Heart right ventricle (tissue), 16 donors: ENCODE measurements at regions of chr2 and their contacts with region 1.

Region 1: DNA sequence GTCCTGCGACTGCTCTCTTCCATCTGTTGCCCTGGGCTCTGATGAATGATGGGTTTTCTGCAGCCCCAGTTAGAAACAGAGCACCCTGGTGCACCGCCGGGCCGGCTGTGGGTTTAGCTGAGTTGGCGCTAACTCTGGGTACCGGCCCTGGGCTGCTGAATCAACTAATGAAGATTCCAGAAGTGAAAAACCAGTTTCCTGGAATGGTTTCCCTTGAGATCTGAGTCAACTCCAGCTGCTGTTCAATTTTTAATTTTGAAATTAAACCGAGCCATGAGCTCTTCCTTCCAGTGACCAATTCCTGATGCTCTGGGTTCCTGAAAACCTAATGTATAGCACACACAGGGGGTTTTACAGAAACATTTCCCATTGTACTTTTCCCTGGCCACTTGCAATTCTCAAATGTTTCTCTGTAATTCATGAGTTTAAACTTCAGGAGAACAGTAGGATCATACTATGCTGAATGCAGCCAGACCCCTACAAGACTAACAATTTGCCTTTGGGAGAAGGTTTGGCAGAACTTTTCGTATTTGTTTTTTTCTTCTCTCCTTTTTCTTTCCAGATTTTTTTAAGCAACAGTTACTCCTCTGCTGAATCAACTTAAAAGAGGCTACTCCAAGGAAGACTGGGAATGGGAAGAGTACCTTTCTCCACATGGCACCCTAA is 5.5 kb downstream of the COL6A3 start:
- DNase-seq: peak in 1 of 2 donors; percentile 38
- ATAC-seq: peak; percentile 21 to 59 (median 42)
- H3K4me3 ChIP-seq: peak overlapping the region in 6 of 10 donors; percentile 11 to 58 (median 26)
- H3K27ac ChIP-seq: peak overlapping the region; percentile 6 to 87 (median 81)
- H3K4me1 ChIP-seq: peaks cover 5 to 66% (median 38%) of the 10 kb centered on the region in 9 donors
- H3K27me3 ChIP-seq: peaks cover 0 to 27% (median 3%) of the 10 kb centered on the region in 7 donors
- CTCF ChIP-seq: no peak

Region 2: GRCh38 chr2:237122214-237122666 is 286.2 kb before region 1 on chr2:
- intact Hi-C with region 1: loop called in 5 of 10 experiments (anchors 2 to 10 kb)
- DNase-seq: peak; percentile 47 to 65
- ATAC-seq: peak; percentile 56 to 86 (median 74)
- H3K4me3 ChIP-seq: no peak overlapping the region
- H3K27ac ChIP-seq: no peak overlapping the region
- H3K4me1 ChIP-seq: peaks cover 0 to 17% (median 0%) of the 10 kb centered on the region in 9 donors
- H3K27me3 ChIP-seq: no peaks in the 10 kb centered on the region
- CTCF ChIP-seq: peak; percentile 46 to 76 (median 71)

Region 3: DNA sequence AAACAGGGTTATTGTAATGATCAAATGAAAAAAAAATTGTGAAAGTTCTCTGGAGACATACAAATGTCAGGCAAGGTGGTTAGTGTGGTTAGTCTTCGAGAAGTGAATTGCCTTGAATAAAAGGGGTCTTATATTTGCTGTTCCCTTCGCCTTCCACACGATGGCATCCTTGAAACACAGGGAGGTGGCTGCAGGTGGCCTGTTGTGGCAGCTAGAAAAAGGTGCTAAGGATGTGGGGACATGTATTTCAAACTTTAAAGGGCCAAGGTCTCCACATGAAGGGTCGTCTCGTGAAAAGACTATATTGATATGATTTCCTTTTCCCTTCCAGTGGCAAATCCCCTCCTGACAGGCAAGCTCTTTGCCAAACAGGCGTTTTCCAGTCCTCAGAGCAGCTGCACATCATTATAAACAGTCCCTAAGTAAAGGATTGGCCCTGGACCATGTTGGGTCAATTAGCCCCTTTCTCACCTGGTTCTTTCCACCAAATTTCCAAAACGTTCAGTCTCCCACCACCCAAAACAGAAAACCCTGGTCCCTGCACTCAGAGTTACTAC is 254.3 kb before region 1 on chr2:
- intact Hi-C with region 1: loop called in 5 of 10 experiments (anchors 1 to 10 kb)
- DNase-seq: no peak
- ATAC-seq: no peak
- H3K4me3 ChIP-seq: no peak overlapping the region
- H3K27ac ChIP-seq: peak overlapping the region in 5 of 10 donors; percentile 14 to 82 (median 76)
- H3K4me1 ChIP-seq: peaks cover 0 to 28% (median 7%) of the 10 kb centered on the region in 9 donors
- H3K27me3 ChIP-seq: peaks cover 0 to 7% (median 0%) of the 10 kb centered on the region in 7 donors
- CTCF ChIP-seq: peak; percentile 12 to 67 (median 63)

Region 4: GRCh38 chr2:237165405-237166276 is 242.8 kb before region 1 on chr2:
- intact Hi-C with region 1: loop called in 6 of 10 experiments (anchors 2 to 5 kb)
- DNase-seq: no peak
- ATAC-seq: peak in 3 of 8 donors; percentile 12 to 39 (median 33)
- H3K4me3 ChIP-seq: no peak overlapping the region
- H3K27ac ChIP-seq: peak overlapping the region in 7 of 10 donors; percentile 33 to 75 (median 47)
- H3K4me1 ChIP-seq: peaks cover 0 to 12% (median 5%) of the 10 kb centered on the region in 9 donors
- H3K27me3 ChIP-seq: no peaks in the 10 kb centered on the region
- CTCF ChIP-seq: peak; percentile 10 to 61 (median 54)

Region 5: DNA sequence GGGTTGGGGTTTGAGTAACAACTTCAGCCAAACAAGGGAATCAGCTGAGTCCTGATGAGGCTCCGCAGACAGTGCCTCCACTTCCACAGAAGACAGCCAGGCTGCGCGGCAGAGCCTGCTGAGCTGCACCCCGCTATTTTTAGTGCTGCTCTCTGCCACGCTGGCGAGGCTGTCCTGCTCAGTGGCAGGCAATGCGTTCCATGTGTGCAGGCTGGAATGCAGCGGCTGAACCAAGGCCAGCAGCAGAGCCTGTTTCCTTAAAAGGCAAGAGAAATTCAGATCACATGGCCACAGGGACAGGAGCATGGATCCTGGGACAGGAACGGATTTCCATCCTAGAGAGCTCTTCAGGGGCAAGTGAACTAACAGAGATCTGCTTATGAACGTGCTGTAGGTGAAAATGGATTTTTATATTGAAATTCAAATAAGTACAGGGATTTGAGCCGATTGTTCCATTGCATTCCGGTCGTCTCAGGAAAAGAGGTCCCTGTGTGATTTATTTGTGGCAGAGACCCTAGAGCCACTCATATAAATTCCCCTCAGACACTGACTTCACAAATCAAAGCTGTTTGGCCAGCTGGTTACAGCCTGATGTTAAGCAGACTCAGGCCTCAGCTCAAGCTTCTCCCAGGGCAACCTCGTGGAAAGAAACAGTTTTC is 93.2 kb before region 1 on chr2:
- intact Hi-C with region 1: loop called in 3 of 10 experiments (anchors 5 to 10 kb)
- DNase-seq: peak; percentile 88 to 91
- ATAC-seq: peak; percentile 93 to 97 (median 95)
- H3K4me3 ChIP-seq: no peak overlapping the region
- H3K27ac ChIP-seq: peak overlapping the region; percentile 85 to 96 (median 88)
- H3K4me1 ChIP-seq: peaks cover 13 to 38% (median 30%) of the 10 kb centered on the region in 9 donors
- H3K27me3 ChIP-seq: no peaks in the 10 kb centered on the region
- CTCF ChIP-seq: peak; percentile 18 to 75 (median 37)

Region 6: GRCh38 chr2:237322564-237322963 is 85.9 kb before region 1 on chr2:
- intact Hi-C with region 1: loop called in 3 of 10 experiments (anchors 5 to 10 kb)
- DNase-seq: no peak
- ATAC-seq: peak in 5 of 8 donors; percentile 23 to 30 (median 26)
- H3K4me3 ChIP-seq: no peak overlapping the region
- H3K27ac ChIP-seq: peak overlapping the region in 8 of 10 donors; percentile 33 to 76 (median 69)
- H3K4me1 ChIP-seq: peaks cover 5 to 58% (median 29%) of the 10 kb centered on the region in 9 donors
- H3K27me3 ChIP-seq: no peaks in the 10 kb centered on the region
- CTCF ChIP-seq: peak in 7 of 9 donors; percentile 34 to 47 (median 41)